ENCODE measurements at regions of chr12 and their contacts with region 1.

Region 1: DNA sequence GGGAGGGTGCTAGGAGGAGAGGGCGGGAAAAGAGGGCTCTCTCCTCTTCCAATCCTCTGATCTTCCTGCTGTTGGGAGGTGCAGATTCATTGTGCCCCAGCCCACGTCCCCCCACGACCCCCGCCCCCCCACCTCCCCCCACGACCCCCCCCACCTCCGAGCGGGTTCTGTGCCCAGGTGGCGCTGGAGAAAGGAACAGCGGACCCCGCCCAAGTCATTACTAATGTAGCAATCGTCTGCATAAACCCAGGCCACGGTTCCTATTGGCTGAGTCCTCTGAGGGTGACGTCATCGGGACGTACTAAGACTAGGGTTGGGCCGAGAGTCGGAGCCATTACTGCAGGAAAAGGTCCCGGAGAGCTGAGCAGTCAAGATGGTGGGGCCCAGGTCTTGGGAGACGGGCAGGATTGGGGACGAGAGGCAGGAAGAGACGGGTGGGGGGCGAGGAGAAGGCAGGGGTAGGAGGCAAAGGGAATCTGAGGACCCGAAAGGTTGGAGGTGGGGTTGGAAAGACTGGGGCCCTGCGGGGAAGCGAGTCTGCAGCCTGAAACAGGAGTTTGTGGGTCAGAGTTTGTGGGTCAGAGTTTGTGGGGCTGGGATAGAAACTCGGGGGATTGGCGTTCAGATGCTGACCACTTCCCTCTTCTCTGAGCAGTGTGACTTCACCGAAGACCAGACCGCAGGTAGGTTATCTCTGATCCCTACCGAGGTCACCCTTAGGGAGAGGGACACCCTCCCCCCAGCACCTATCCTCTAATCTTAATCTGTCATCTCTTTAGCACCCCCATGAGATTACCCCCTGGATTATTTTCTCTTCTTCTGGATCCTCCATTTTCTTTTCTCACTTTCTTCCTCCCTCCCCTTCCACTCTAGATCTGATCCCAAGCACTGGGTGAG is at the start of gene MYL6:
- DNase-seq: peak; percentile 88 to 91
- H3K4me3 ChIP-seq: peak within 1 kb of the TSS; percentile 63 to 97 (median 93)
- H3K27ac ChIP-seq: peak within 1 kb of the TSS; percentile 99
- H3K4me1 ChIP-seq: peaks cover 8 to 37% (median 22%) of the 10 kb centered on the region in 4 experiments
- H3K27me3 ChIP-seq: no peaks in the 10 kb centered on the region
- CTCF ChIP-seq: no peak
- EP300 ChIP-seq: peak in 1 of 2 experiments; percentile 75; a peak in 2 of 3 replicates
- POLR2A ChIP-seq: peak; percentile 98
- RAD21 ChIP-seq: no peak
- total RNA-seq, gene MYL6: 1,130 and 1,137 TPM in 2 replicates

Region 2: GRCh38 chr12:56007564-56008559 is 150.4 kb before region 1 on chr12:
- CTCF ChIA-PET with region 1: no interaction called
- POLR2A ChIA-PET with region 1: no interaction called
- DNase-seq: peak in 1 of 2 experiments; percentile 94
- H3K4me3 ChIP-seq: peak overlapping the region; percentile 52 to 90 (median 83)
- H3K27ac ChIP-seq: peak overlapping the region; percentile 62
- H3K4me1 ChIP-seq: peaks cover 0 to 4% (median 2%) of the 10 kb centered on the region in 4 experiments; a peak in 3 of 7 replicates
- H3K27me3 ChIP-seq: no peaks in the 10 kb centered on the region
- CTCF ChIP-seq: no peak
- EP300 ChIP-seq: no peak
- POLR2A ChIP-seq: peak; percentile 63
- RAD21 ChIP-seq: no peak

Region 3: DNA sequence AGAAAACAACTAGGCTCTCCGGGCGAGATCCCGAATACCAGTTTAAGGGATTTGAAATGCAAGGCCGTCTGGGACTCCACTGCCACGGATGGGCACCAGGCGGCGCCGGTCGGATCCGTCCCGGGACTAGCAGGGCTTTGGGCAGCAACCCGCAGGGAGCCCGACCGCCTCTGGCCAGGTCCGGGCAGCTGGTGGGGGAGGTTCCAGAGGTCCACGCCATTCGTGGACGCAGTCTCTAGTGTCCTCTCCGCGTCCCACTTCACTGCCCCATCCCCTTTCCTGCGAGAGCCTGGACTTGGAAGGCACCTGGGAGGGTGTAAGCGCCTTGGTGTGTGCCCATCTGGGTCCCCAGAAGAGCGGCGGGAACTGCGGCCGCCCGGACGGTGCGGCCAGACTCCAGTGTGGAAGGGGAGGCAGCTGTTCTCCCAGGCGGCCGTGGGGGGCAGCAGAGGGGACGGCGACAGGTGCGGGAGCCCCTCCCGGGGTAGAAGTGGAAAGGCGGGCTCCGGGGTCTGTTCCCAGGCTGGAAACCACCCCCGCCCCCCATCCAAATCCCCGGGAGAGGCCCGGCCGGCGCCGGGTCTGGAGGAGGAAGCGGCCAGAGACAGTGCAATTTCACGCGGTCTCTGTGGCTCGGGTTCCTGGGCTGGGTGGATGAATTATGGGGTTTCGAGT is 79.2 kb before region 1 on chr12:
- CTCF ChIA-PET with region 1: no interaction called
- POLR2A ChIA-PET with region 1: interaction called, 14 read pairs
- DNase-seq: peak; percentile 82 to 98
- H3K4me3 ChIP-seq: peak overlapping the region; percentile 74 to 89 (median 80)
- H3K27ac ChIP-seq: peak overlapping the region; percentile 92
- H3K4me1 ChIP-seq: peaks cover 3 to 17% (median 11%) of the 10 kb centered on the region in 4 experiments
- H3K27me3 ChIP-seq: no peaks in the 10 kb centered on the region
- CTCF ChIP-seq: peak; percentile 73 to 81 (median 78)
- EP300 ChIP-seq: 0 out of 3 replicates have a peak, but pooled peaks of 1 of the 2 experiments have one; percentile 38
- POLR2A ChIP-seq: peak in 1 of 2 experiments; percentile 84; a peak in 2 of 3 replicates
- RAD21 ChIP-seq: peak; percentile 35 to 51; a peak in 3 of 4 replicates

Region 4: DNA sequence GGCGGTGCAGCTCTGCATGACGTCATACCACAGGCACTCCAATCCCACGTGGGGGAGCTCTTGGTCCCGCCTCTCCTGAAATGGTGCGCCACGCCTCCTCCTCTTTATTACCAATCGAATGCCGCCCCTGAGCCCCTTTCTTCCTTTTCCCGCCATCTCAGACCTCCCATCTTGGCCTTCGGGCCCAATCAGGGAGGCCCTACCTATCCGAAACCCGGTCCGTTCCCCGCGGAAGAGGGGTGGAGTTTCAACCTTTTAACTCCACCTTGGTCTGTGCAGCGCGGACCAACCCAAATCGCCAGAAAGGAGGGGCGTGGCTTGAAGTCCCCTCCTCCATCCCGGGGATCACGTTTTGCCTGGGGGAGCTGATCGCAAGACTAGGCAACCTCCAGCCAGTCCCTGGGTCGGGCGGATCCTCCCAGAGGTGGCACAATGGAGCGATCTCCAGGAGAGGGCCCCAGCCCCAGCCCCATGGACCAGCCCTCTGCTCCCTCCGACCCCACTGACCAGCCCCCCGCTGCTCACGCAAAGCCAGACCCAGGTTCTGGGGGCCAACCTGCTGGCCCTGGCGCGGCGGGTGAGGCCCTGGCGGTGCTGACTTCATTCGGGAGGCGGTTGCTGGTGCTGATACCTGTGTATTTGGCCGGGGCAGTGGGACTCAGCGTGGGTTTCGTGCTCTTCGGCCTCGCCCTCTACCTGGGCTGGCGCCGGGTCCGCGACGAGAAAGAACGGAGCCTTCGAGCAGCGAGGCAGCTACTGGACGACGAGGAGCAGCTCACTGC is 30.2 kb before region 1 on chr12 and contains the start of gene ESYT1:
- CTCF ChIA-PET with region 1: interaction called, 20 read pairs
- POLR2A ChIA-PET with region 1: no interaction called
- DNase-seq: peak; percentile 97 to 100
- H3K4me3 ChIP-seq: peak within 1 kb of the TSS; percentile 79 to 95 (median 90)
- H3K27ac ChIP-seq: peak within 1 kb of the TSS; percentile 88
- H3K4me1 ChIP-seq: peaks cover 0 to 13% (median 5%) of the 10 kb centered on the region in 4 experiments; a peak in 5 of 7 replicates
- H3K27me3 ChIP-seq: no peaks in the 10 kb centered on the region
- CTCF ChIP-seq: no peak
- EP300 ChIP-seq: peak in 1 of 2 experiments; percentile 57; a peak in 1 of 3 replicates
- POLR2A ChIP-seq: peak; percentile 93 to 96
- RAD21 ChIP-seq: no peak; a peak in 1 of 4 replicates
- total RNA-seq, gene ESYT1: 85.1 and 86.9 TPM in 2 replicates

Region 5: DNA sequence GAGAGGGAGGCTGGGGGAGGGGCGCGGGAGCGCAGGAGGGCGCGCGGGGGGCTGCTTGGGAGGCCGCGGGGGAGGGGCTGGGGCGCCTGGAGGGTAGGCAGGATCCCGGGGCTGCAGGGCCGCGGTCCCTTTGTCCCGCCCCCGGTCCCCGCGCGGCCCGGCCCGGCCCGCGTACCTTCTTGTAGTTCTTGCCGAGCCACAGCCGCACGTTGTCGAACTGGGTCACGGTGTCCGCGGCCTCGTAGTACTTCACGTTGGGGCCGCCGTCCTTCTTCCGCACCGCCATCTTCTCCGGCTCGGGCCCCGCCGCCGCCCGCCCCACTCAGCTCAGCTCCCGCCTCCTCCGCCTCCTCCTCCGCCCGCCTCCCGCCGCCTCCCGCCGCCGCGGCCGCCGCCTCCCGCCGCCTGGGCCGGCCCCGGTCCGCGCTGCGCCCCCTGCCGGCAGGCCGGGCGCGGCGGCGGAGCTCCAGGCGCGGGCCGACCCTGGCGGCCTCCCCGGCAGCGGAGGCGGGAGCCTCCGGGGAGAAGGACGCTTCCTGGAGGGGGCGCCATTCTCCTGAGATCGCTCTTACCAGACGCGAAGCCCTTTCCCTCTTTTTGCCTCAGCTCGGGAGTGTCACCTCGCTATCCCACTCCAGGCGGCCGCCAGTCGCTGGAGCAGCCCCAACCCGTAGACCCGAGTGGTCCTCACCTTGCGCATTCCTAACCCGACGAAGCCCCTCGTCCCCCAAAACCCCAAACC is 31.1 kb after region 1 on chr12 and contains the start of gene SMARCC2:
- CTCF ChIA-PET with region 1: interaction called, 12 read pairs
- POLR2A ChIA-PET with region 1: interaction called, 656 read pairs
- DNase-seq: peak; percentile 75 to 92
- H3K4me3 ChIP-seq: peak within 1 kb of the TSS; percentile 82 to 95 (median 90)
- H3K27ac ChIP-seq: peak within 1 kb of the TSS; percentile 81
- H3K4me1 ChIP-seq: peaks cover 2 to 8% (median 4%) of the 10 kb centered on the region in 4 experiments; a peak in 3 of 7 replicates
- H3K27me3 ChIP-seq: no peaks in the 10 kb centered on the region
- CTCF ChIP-seq: peak; percentile 75 to 96 (median 84)
- EP300 ChIP-seq: peak in 1 of 2 experiments; percentile 26; a peak in 1 of 3 replicates
- POLR2A ChIP-seq: peak; percentile 24 to 65
- RAD21 ChIP-seq: peak; percentile 26 to 48; a peak in 3 of 4 replicates
- total RNA-seq, gene SMARCC2: 66.3 and 78.5 TPM in 2 replicates

Region 6: GRCh38 chr12:56206457-56207166 is 48.3 kb after region 1 on chr12:
- CTCF ChIA-PET with region 1: interaction called, 5 read pairs
- POLR2A ChIA-PET with region 1: interaction called, 55 read pairs
- DNase-seq: peak in 1 of 2 experiments; percentile 84
- H3K4me3 ChIP-seq: no peak overlapping the region
- H3K27ac ChIP-seq: no peak overlapping the region
- H3K4me1 ChIP-seq: no peaks in the 10 kb centered on the region
- H3K27me3 ChIP-seq: no peaks in the 10 kb centered on the region
- CTCF ChIP-seq: peak; percentile 78 to 91 (median 85)
- EP300 ChIP-seq: no peak
- POLR2A ChIP-seq: 0 out of 3 replicates have a peak, but pooled peaks of 1 of the 2 experiments have one; percentile 5
- RAD21 ChIP-seq: peak; percentile 68 to 74

Region 7: GRCh38 chr12:56266693-56267442 is 108.6 kb after region 1 on chr12 and contains the start of gene COQ10A:
- CTCF ChIA-PET with region 1: interaction called, 3 read pairs
- POLR2A ChIA-PET with region 1: interaction called, 14 read pairs
- DNase-seq: peak; percentile 51 to 95
- H3K4me3 ChIP-seq: peak within 1 kb of the TSS; percentile 82 to 88 (median 87)
- H3K27ac ChIP-seq: peak within 1 kb of the TSS; percentile 84
- H3K4me1 ChIP-seq: peaks cover 0 to 9% (median 3%) of the 10 kb centered on the region in 4 experiments; a peak in 4 of 7 replicates
- H3K27me3 ChIP-seq: no peaks in the 10 kb centered on the region
- CTCF ChIP-seq: peak; percentile 41 to 71 (median 70)
- EP300 ChIP-seq: no peak
- POLR2A ChIP-seq: peak; percentile 51 to 85
- RAD21 ChIP-seq: peak in 1 of 2 experiments; percentile 1; a peak in 1 of 4 replicates
- total RNA-seq, gene COQ10A: 21.8 and 22.8 TPM in 2 replicates

Measured in H1 (cell line).